IMR-90 (cell line): ENCODE measurements at regions of chr1 and their contacts with region 1.

Region 1: GRCh38 chr1:8629241-8630091 is 188.0 kb downstream of the RERE start:
- DNase-seq: peak; percentile 76
- ATAC-seq: peak; percentile 31
- H3K4me3 ChIP-seq: no peak overlapping the region
- H3K27ac ChIP-seq: peak overlapping the region; percentile 6; the same call in 1 of the 2 replicates
- H3K4me1 ChIP-seq: peaks cover 30% of the 10 kb centered on the region
- H3K27me3 ChIP-seq: no peaks in the 10 kb centered on the region
- CTCF ChIP-seq: no peak
- POLR2A ChIP-seq: no peak
- RAD21 ChIP-seq: no peak

Region 2: GRCh38 chr1:8409106-8409505 is 220.4 kb before region 1 on chr1:
- CTCF ChIA-PET with region 1: no interaction called
- POLR2A ChIA-PET with region 1: interaction called, 10 read pairs
- dilution Hi-C with region 1: no loop called
- in situ Hi-C with region 1: no loop called
- intact Hi-C with region 1: no loop called
- DNase-seq: peak; percentile 81
- ATAC-seq: peak; percentile 38
- H3K4me3 ChIP-seq: no peak overlapping the region
- H3K27ac ChIP-seq: peak overlapping the region; percentile 87
- H3K4me1 ChIP-seq: peaks cover 50% of the 10 kb centered on the region
- H3K27me3 ChIP-seq: no peaks in the 10 kb centered on the region
- CTCF ChIP-seq: peak; percentile 43
- POLR2A ChIP-seq: no peak
- RAD21 ChIP-seq: peak; percentile 44; the same call in 1 of the 2 replicates

Region 3: GRCh38 chr1:8660411-8660828 is 31.0 kb after region 1 on chr1:
- CTCF ChIA-PET with region 1: no interaction called
- POLR2A ChIA-PET with region 1: no interaction called
- dilution Hi-C with region 1: no loop called
- in situ Hi-C with region 1: no loop called
- intact Hi-C with region 1: loop called (anchors 2 kb)
- DNase-seq: peak; percentile 94
- ATAC-seq: peak; percentile 91
- H3K4me3 ChIP-seq: no peak overlapping the region; the same call in 1 of the 2 replicates
- H3K27ac ChIP-seq: peak overlapping the region; percentile 15; the same call in 1 of the 2 replicates
- H3K4me1 ChIP-seq: peaks cover 30% of the 10 kb centered on the region
- H3K27me3 ChIP-seq: no peaks in the 10 kb centered on the region
- CTCF ChIP-seq: no peak
- POLR2A ChIP-seq: peak; percentile 39; the same call in 1 of the 2 replicates
- RAD21 ChIP-seq: no peak; the same call in 1 of the 2 replicates

Region 4: DNA sequence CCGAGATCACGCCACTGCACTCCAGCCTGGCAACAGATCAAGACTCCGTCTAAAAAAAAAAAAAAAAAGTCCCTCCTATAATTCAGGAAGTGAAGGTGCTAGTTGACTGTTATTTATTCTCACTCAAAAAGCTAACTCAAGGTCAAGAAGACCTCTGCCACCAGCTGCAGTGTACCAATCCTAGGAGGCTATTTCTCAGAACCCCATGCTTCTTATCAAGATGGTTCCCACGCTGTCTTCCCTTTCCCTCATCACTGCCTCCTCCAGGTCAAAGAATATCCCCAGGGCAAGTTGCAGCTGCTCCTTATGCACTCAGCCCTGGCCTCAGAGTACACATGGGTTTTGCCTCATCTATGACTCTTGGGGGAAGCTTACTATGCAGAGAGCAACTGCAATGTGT is 134.4 kb after region 1 on chr1:
- CTCF ChIA-PET with region 1: no interaction called
- POLR2A ChIA-PET with region 1: no interaction called
- dilution Hi-C with region 1: no loop called
- in situ Hi-C with region 1: no loop called
- intact Hi-C with region 1: no loop called
- DNase-seq: peak; percentile 9
- ATAC-seq: peak; percentile 42
- H3K4me3 ChIP-seq: no peak overlapping the region
- H3K27ac ChIP-seq: no peak overlapping the region
- H3K4me1 ChIP-seq: peaks cover 5% of the 10 kb centered on the region
- H3K27me3 ChIP-seq: no peaks in the 10 kb centered on the region
- CTCF ChIP-seq: no peak
- POLR2A ChIP-seq: no peak
- RAD21 ChIP-seq: no peak

Region 5: GRCh38 chr1:8817406-8818324 is 188.2 kb after region 1 on chr1 and contains the start of gene RERE:
- CTCF ChIA-PET with region 1: no interaction called
- POLR2A ChIA-PET with region 1: no interaction called
- dilution Hi-C with region 1: no loop called
- in situ Hi-C with region 1: no loop called
- intact Hi-C with region 1: loop called (anchors 5 kb)
- DNase-seq: peak; percentile 91
- ATAC-seq: peak; percentile 91
- H3K4me3 ChIP-seq: peak within 1 kb of the TSS; percentile 82
- H3K27ac ChIP-seq: peak within 1 kb of the TSS; percentile 92
- H3K4me1 ChIP-seq: peaks cover 7% of the 10 kb centered on the region
- H3K27me3 ChIP-seq: no peaks in the 10 kb centered on the region
- CTCF ChIP-seq: peak; percentile 15; the same call in 1 of the 2 replicates
- POLR2A ChIP-seq: peak; percentile 93
- RAD21 ChIP-seq: no peak
- total RNA-seq, gene RERE: 11.5 and 15.8 TPM in 2 replicates